Activated T-helper 1 cell treated with anti-CD3 and anti-CD28 coated beads, Interleukin-12 subunit alpha, Interleukin-12 subunit beta, Interleukin-2, Interleukin-4 antibody, amounts not matched to agents 30 ng/mL and 10 ng/mL and 1 ng/mL, durations not matched to agents 14 hours and 24 hours and 36 hours (primary cell): ENCODE measurements at regions of chr10 and their contacts with region 1.

Region 1: GRCh38 chr10:89391917-89392756 is at the start of gene IFIT1:
- DNase-seq: peak; percentile 42
- H3K4me3 Mint-ChIP-seq: peak within 1 kb of the TSS; percentile 86
- H3K27ac Mint-ChIP-seq: peak within 1 kb of the TSS; percentile 78
- H3K4me1 Mint-ChIP-seq: peaks cover 44% of the 10 kb centered on the region
- H3K27me3 Mint-ChIP-seq: peaks cover 4% of the 10 kb centered on the region
- total RNA-seq, gene IFIT1: 0.39 and 0.59 TPM in 2 replicates

Region 2: DNA sequence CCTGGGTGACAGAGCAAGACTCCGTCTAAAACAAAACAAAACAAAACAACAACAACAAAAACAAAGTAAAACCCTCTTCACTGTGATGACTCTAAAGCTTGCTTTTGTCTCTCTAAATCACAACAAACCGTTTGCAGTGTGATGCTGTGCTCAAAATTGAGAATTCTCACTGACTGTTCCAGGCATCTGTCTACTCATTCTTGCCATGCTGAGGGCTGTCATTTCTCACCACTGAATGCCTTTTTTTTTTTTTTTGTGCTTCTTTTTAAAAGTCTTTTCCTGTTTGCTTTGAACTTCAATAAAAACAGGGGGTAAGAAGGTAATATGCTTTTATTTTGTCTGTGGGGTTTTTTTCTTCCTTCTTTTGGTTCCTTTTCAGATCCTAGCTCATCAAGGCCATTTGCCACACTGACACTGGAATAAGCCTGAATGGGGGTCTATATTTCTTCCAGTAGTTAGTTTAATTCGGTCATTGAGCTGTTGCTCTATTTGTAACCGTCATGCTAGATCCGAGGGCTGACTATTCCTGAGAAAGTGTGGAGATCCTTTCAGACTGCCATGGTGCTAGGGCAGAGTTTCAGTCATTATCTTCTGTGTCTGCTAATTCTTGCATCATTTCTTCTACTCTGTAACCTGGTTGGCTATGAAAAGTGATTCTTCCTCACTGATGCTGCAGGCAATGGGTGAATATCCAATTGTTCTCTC is 391.0 kb before region 1 on chr10:
- intact Hi-C with region 1: loop called (anchors 5 kb)
- DNase-seq: no peak
- H3K4me3 Mint-ChIP-seq: peak overlapping the region; percentile 37
- H3K27ac Mint-ChIP-seq: peak overlapping the region; percentile 81
- H3K4me1 Mint-ChIP-seq: peaks cover 76% of the 10 kb centered on the region
- H3K27me3 Mint-ChIP-seq: no peaks in the 10 kb centered on the region

Region 3: GRCh38 chr10:89351780-89352597 is 40.1 kb before region 1 on chr10:
- intact Hi-C with region 1: loop called (anchors 1 kb)
- DNase-seq: no peak
- H3K4me3 Mint-ChIP-seq: no peak overlapping the region
- H3K27ac Mint-ChIP-seq: no peak overlapping the region
- H3K4me1 Mint-ChIP-seq: peaks cover 27% of the 10 kb centered on the region
- H3K27me3 Mint-ChIP-seq: peaks cover 48% of the 10 kb centered on the region